PC-3 (cell line): ENCODE measurements at regions of chr2 and their contacts with region 1.

Region 1: DNA sequence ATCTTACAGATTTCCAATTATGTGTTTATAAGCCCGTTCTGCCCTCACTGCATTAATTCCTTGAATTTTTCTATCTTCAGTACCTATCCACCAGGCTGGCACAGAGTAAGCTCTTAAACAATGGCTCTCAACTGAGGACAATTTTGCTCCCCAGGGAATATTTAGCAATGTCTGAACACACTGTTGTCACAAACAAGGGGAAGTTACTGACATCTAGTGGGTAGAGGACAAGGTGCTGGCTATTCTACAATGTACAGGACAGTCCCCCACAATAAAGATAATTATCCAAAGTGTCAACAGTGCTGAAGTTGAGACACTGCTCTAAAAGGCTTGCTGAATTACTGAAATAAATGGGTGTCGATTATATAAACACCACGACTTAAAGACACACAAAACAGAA is 5.0 kb downstream of the NDUFS1 start:
- DNase-seq: peak; percentile 26
- ATAC-seq: peak; percentile 39; the same call in 1 of the 2 replicates
- H3K4me3 ChIP-seq: no peak overlapping the region
- H3K27ac ChIP-seq: no peak overlapping the region
- H3K4me1 ChIP-seq: peaks cover 8% of the 10 kb centered on the region; the same call in 1 of the 2 replicates
- H3K27me3 ChIP-seq: no peaks in the 10 kb centered on the region
- CTCF ChIP-seq: peak; percentile 49

Region 2: DNA sequence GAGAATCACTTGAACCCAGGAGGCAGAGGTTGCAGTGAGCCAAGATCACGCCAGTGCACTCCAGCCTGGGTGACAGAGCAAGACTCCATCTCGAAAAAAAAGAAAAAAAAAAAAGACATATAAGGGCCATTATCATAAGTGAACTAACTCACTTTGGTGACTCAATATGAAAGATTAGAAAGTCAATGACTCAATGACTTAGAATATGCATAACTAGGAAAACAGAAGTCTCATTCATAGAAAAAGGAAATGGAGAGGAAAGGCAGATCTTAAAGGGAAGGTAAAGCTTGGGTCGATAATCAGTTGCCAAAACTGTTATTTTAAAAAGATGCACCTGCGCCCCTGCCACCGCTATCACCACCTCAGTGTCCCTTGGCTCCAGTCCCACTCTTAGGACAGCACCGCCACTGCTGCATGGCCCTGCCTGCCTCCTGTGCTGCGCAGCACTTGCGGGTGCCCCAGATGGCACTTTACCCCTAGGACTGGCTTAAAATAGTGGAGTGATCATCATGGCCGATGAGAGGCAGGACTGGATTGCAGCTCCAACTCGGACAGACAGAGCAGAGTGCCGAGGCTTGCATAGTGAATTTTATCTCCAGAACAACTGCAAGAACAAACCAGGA is 122.9 kb before region 1 on chr2:
- CTCF ChIA-PET with region 1: no interaction called
- POLR2A ChIA-PET with region 1: no interaction called
- intact Hi-C with region 1: loop called (anchors 5 kb)
- DNase-seq: peak; percentile 70
- ATAC-seq: peak; percentile 83
- H3K4me3 ChIP-seq: no peak overlapping the region
- H3K27ac ChIP-seq: peak overlapping the region; percentile 26; the same call in 1 of the 2 replicates
- H3K4me1 ChIP-seq: peaks cover 11% of the 10 kb centered on the region
- H3K27me3 ChIP-seq: no peaks in the 10 kb centered on the region
- CTCF ChIP-seq: no peak